GM18951 (cell line): ENCODE measurements at regions of chr1 and their contacts with region 1.

Region 1: DNA sequence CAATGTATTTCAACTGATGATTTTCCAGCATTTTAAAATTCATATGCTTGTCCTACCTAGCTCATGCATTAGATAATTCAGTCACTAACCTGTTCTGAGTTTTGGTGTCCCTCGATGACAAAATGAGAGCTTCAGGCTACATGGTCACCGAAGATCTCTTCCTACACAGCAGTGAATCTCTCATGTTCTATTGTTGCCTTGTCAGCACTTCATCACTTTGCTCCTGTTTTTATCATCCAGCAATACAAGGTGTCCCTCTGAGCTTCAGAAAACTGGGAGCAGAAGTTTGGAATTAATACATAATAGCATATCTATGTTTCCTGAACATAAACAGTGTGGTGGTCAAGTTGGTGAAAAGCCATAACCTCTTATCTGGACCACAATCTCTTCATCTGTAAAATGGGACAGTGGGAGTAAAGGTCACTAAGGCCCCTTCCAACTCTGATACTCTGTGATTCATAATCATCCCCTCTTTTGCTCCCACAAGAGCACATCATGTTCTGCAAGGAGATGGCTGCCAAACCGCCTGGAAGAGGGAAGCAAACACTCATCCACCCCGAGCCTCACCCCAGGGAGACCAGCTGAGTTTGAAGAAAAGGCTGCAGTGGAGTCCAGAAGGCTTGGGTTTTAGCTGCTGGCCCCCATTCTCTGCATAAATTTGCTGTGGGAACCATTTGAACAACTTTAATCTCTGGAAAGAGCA is 137.9 kb upstream of the F3 start:
- POLR2A ChIP-seq: no peak

Region 2: GRCh38 chr1:94579876-94580294 is 99.6 kb before region 1 on chr1:
- in situ Hi-C with region 1: loop called (anchors 10 kb)
- POLR2A ChIP-seq: no peak